Activated naive CD4-positive, alpha-beta T cell treated with anti-CD3 and anti-CD28 coated beads for 36 hours (primary cell): ENCODE measurements at regions of chr6 and their contacts with region 1.

Region 1: GRCh38 chr6:170290306-170291128 is at the start of gene DLL1:
- DNase-seq: peak; percentile 50
- H3K4me3 Mint-ChIP-seq: peak within 1 kb of the TSS; percentile 79
- H3K27ac Mint-ChIP-seq: no peak within 1 kb of the TSS
- H3K4me1 Mint-ChIP-seq: peaks cover 44% of the 10 kb centered on the region
- H3K27me3 Mint-ChIP-seq: peaks cover 44% of the 10 kb centered on the region
- total RNA-seq, gene DLL1: 3.2 to 3.5 TPM

Region 2: DNA sequence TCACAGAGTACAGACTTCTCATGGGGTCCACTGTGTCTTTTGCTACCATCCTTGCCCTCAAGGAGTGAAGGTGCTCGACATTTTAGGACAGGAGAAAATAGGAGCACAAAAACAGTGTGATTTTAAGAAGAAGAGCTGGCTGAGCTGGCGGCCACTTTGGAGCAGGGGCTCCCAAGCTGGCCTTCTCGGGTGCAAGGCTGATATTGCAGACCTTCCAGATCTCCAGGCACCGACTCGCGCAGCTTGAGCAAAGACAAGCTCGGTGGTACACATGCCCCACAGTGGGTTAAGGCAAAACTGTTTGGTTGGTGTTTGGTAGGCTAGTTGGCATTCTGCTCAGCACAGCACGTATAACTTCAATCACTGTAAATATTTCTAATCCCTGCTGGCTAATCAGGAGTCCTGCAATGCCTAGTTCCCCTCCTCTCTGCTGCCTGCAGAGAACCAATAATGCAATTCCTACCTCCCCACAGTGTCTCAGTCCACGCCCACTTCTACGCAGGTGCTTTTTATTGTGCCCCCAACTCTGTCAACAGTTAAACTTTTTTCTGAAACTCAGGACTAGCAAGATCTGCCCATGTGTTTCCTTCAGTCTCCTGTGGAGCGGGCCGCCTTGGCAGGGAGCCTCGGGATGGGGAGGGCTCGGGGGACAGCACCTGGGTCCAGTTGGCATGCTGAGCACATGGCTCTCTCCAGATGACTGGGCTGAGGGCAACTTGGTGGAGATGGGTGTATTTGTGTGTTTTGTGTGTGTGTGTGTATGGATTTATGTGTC is 1862.3 kb before region 1 on chr6:
- CTCF ChIA-PET with region 1: no interaction called
- intact Hi-C with region 1: no loop called
- DNase-seq: no peak
- H3K4me3 Mint-ChIP-seq: no peak overlapping the region
- H3K27ac Mint-ChIP-seq: no peak overlapping the region
- H3K4me1 Mint-ChIP-seq: no peaks in the 10 kb centered on the region
- H3K27me3 Mint-ChIP-seq: peaks cover 11% of the 10 kb centered on the region

Region 3: DNA sequence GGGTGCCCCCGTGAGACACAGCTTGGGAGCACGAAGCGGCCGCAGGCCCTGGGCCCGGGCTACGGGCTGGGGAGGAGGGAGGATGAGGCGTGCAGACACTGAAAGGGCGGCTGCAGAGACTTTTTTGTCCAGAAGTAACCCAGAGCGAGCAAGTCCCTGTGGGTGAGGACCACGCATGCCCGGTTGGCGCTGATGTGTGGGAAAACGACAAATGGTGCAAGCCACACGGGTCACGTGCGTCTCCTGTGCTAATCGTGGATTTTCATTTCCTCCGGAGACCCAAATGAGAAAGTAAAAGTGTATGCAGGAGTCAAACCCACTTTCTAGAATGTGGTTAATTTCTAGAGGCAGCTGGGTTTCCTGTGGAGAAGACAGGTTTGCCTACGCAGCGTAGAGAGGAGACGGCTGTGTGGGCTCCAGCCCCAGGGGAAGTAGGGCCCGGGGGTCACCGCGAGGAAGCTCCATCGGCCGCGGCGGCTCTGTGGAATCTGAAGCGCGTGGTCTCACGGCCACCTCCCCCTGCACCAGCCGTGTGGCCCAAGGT is 18.7 kb before region 1 on chr6:
- CTCF ChIA-PET with region 1: interaction called, 4 read pairs
- intact Hi-C with region 1: loop called (anchors 1 kb)
- DNase-seq: peak; percentile 91
- H3K4me3 Mint-ChIP-seq: peak overlapping the region; percentile 70
- H3K27ac Mint-ChIP-seq: peak overlapping the region; percentile 78
- H3K4me1 Mint-ChIP-seq: peaks cover 11% of the 10 kb centered on the region
- H3K27me3 Mint-ChIP-seq: no peaks in the 10 kb centered on the region